ENCODE measurements at regions of chr3 and their contacts with region 1.

Region 1: DNA sequence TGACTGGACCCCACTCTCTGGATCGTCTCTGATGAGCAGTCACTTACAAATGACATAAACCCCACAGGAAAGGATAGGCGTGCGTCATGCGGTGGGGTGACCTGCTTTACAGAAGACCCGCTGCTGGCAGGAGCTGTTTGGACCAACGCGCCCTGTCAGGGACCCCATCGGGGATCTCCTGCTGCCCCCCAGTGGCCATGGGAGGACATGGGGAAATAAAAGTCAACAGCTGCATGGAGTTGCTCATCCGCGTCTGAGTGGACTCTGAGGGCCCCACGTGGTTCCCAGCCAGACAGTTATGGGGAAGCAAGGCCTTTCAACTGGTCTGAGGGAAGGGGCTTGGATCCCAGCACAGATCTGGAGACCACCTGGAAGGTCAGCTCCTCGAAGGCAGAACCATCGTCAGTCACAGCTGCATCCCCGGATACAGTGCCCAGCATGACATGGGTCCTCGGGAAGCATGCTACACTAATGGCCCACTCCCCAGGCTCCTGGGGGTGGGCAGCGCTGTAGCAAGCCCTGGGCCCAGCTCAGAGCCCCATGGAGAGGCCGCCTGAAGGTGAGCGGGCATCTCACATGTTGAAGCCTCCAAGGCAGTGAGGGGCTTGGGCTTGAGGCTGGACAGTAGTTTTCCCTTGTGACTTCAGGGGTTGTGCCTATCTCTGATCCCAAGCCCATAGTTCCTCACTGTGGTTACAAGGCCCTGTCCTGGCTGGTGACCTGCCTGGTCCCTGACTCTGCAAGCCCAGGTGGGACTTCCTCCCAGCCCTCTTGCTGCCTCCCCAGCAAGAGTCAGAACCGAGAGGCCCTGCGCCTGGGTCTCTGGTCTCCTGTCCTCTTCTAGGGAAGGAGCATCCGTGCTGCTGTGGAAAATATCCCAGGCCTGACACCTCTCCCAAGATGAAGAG is 32.3 kb downstream of the PTH1R start:
- DNase-seq: peak; percentile 85 to 96 (median 89)
- H3K4me3 ChIP-seq: no peak overlapping the region
- H3K27ac ChIP-seq: peak overlapping the region in 1 of 5 donors; percentile 44
- H3K4me1 ChIP-seq: peaks cover 0 to 16% of the 10 kb centered on the region in 2 donors
- H3K27me3 ChIP-seq: no peaks in the 10 kb centered on the region
- CTCF ChIP-seq: peak; percentile 72 to 89 (median 86)
- POLR2A ChIP-seq: no peak

Region 2: DNA sequence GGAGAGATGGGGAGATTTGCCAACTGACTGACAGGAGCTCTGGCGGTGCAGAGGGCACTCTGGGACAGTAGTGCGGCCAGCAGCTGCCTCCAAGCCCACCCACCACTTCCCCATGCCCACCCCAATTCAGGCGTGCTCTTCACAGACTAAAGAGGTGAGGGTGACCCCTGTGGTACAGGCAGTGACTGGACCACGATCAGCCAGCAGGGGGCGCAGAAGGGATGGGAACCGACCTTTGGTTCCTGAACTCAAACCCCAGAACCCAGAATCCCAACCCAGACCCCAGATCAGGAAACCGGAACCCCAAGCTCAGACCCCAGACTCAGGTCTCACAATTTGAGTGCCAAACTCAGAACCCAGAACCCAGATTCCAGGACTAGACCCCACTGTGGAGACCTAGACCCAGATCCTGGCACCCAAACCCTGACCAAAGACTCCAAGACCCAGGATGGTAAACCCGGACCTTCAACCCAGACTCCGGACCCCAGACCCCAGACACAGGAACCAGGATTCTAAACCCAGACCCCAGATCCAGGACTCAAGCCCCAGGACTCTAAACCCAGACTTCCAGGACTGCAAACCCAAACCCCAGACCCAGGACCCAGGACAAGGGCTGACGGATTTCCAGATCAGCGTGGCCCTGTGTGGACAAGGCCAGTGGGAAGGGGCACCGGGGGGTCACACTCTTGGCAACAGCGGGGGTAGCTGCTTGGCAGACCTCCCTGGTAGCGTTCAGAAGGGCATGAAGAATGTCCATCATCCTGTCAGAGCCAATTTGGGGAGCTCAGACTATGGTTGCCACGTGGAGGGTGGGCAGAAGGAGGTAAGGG is 42.9 kb before region 1 on chr3:
- intact Hi-C with region 1: loop called (anchors 5 kb)
- DNase-seq: peak; percentile 70 to 91 (median 87)
- H3K4me3 ChIP-seq: no peak overlapping the region
- H3K27ac ChIP-seq: peak overlapping the region in 4 of 5 donors; percentile 5 to 82 (median 50)
- H3K4me1 ChIP-seq: peaks cover 14% of the 10 kb centered on the region in 2 donors
- H3K27me3 ChIP-seq: no peaks in the 10 kb centered on the region
- CTCF ChIP-seq: peak; percentile 74 to 91 (median 85)
- POLR2A ChIP-seq: no peak

Measured in adrenal gland (tissue), 19 donors.